ENCODE measurements at regions of chr3 and their contacts with region 1.

Region 1: GRCh38 chr3:189927975-189928895 is 192.5 kb downstream of the P3H2 start:
- DNase-seq: peak; percentile 84
- H3K4me3 Mint-ChIP-seq: no peak overlapping the region
- H3K27ac Mint-ChIP-seq: peak overlapping the region; percentile 85
- H3K4me1 Mint-ChIP-seq: peaks cover 15% of the 10 kb centered on the region
- H3K27me3 Mint-ChIP-seq: no peaks in the 10 kb centered on the region
- CTCF ChIP-seq: no peak

Region 2: DNA sequence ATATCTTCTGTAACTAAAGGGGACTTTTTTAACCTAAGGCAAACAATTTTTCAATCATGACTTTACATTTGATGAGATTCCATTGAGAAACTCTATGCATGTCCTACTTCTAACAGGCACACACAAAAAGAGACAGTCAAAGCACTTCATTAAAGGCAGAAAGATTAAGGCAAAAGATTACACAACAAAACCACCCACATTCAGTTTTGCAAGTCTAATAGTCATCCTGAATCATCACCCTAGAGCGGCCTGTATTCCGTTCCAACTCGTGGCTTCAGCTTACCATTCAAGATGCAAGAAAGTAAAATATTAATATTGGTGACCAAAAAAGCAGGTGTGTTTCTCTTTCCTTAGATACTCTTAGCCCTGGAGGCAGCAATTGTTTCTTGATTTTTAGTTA is 13.4 kb before region 1 on chr3:
- CTCF ChIA-PET with region 1: no interaction called
- POLR2A ChIA-PET with region 1: interaction called, 29 read pairs
- intact Hi-C with region 1: no loop called
- DNase-seq: peak; percentile 96
- H3K4me3 Mint-ChIP-seq: no peak overlapping the region
- H3K27ac Mint-ChIP-seq: peak overlapping the region; percentile 59
- H3K4me1 Mint-ChIP-seq: peaks cover 37% of the 10 kb centered on the region
- H3K27me3 Mint-ChIP-seq: no peaks in the 10 kb centered on the region
- CTCF ChIP-seq: no peak